ENCODE measurements at regions of chr1 and their contacts with region 1.

Region 1: GRCh38 chr1:167599957-167600581 is 30.0 kb upstream of the RCSD1 start:
- DNase-seq: no peak
- H3K4me3 ChIP-seq: no peak overlapping the region
- H3K27ac ChIP-seq: no peak overlapping the region
- H3K4me1 ChIP-seq: no peaks in the 10 kb centered on the region
- H3K27me3 ChIP-seq: no peaks in the 10 kb centered on the region
- CTCF ChIP-seq: peak in 1 of 3 experiments; percentile 30
- POLR2A ChIP-seq: no peak

Region 2: DNA sequence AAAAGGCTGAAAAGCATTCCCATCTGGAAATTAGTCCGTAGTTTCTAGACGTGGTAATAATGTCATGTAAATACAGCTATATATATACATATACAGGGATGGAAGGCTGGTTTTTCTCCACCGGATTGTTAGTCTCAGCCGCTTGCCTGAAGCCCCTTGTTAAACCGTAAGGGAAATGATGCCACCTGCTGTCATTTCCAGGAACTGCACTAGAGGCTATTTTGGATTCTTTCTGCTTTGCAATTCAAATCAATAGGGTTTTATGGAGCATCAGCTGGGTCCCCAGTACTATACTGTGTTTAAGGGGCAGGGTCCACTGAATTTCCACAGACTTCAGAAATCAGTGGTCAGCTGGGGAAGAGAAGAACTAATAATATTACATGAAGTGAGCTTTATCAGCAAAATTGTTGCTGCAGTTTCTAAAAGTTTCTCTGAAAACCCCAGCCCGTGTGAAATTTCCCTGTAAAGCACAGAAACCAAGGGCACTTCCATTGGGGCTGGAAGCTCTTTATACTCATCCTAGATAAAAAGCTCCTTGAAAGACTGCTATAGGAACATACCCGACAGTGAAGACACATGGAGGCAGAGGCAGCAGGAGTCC is 88.0 kb after region 1 on chr1:
- intact Hi-C with region 1: loop called (anchors 2 kb)
- DNase-seq: no peak
- H3K4me3 ChIP-seq: no peak overlapping the region
- H3K27ac ChIP-seq: no peak overlapping the region
- H3K4me1 ChIP-seq: no peaks in the 10 kb centered on the region
- H3K27me3 ChIP-seq: no peaks in the 10 kb centered on the region
- CTCF ChIP-seq: peak; percentile 69 to 86 (median 84)
- POLR2A ChIP-seq: no peak

Region 3: DNA sequence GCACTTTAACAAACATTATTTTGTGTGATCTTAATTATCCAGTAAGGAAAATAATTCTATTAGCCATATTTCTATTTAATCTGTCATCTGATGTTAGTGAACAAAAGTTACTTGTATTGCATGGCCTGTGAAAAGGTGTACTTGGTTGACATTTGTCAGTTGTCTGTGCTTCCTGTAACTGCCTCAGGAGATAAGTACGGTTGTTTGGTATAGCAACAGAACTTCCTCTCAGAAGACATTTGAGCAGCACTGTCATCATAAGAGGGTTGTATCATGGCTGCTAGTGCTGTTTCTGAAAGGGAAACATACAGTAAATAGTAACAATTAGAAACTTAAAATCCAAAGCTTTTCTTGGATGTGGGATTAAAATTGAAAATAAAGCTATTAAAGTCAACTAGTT is 1771.3 kb after region 1 on chr1:
- intact Hi-C with region 1: loop called (anchors 10 kb)
- DNase-seq: no peak
- H3K4me3 ChIP-seq: no peak overlapping the region
- H3K27ac ChIP-seq: no peak overlapping the region
- H3K4me1 ChIP-seq: peaks cover 18% of the 10 kb centered on the region
- H3K27me3 ChIP-seq: no peaks in the 10 kb centered on the region
- CTCF ChIP-seq: no peak
- POLR2A ChIP-seq: no peak